Activated naive CD4-positive, alpha-beta T cell treated with anti-CD3 and anti-CD28 coated beads, Interleukin-2, amount 10 ng/mL, durations not matched to agents 7 days and 5 days (primary cell): ENCODE measurements at regions of chr10 and their contacts with region 1.

Region 1: GRCh38 chr10:63866075-63866746 is 345.0 kb downstream of the REEP3 start:
- DNase-seq: peak; percentile 53
- H3K4me3 Mint-ChIP-seq: no peak overlapping the region
- H3K27ac Mint-ChIP-seq: no peak overlapping the region
- H3K4me1 Mint-ChIP-seq: peaks cover 6% of the 10 kb centered on the region
- H3K27me3 Mint-ChIP-seq: peaks cover 24% of the 10 kb centered on the region

Region 2: DNA sequence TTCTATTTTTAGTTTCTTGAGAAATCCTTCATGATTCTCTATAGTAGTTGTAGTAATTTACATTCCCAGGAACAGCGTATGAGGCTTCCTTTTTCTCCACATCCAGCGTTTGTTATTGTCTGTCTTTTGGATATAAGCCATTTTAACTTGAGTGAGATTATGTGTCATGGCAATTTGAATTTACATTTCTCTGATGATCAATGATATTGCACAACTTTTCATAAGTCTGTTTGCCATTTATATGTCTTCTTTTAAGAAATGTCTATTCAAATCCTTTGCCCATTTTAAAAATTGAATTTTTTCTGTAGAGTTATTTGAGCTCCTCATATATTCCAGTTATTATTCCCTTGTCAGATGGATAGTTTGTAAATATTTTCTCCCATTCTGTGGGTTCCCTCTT is 59.9 kb before region 1 on chr10:
- CTCF ChIA-PET with region 1: no interaction called
- DNase-seq: no peak
- H3K4me3 Mint-ChIP-seq: no peak overlapping the region
- H3K27ac Mint-ChIP-seq: no peak overlapping the region
- H3K4me1 Mint-ChIP-seq: no peaks in the 10 kb centered on the region
- H3K27me3 Mint-ChIP-seq: no peaks in the 10 kb centered on the region

Region 3: GRCh38 chr10:63964406-63964805 is 98.2 kb after region 1 on chr10:
- CTCF ChIA-PET with region 1: no interaction called
- DNase-seq: no peak
- H3K4me3 Mint-ChIP-seq: no peak overlapping the region
- H3K27ac Mint-ChIP-seq: no peak overlapping the region
- H3K4me1 Mint-ChIP-seq: no peaks in the 10 kb centered on the region
- H3K27me3 Mint-ChIP-seq: no peaks in the 10 kb centered on the region

Region 4: GRCh38 chr10:63976538-63976937 is 110.3 kb after region 1 on chr10:
- CTCF ChIA-PET with region 1: interaction called, 19 read pairs
- DNase-seq: peak; percentile 54
- H3K4me3 Mint-ChIP-seq: no peak overlapping the region
- H3K27ac Mint-ChIP-seq: no peak overlapping the region
- H3K4me1 Mint-ChIP-seq: no peaks in the 10 kb centered on the region
- H3K27me3 Mint-ChIP-seq: peaks cover 3% of the 10 kb centered on the region